ENCODE measurements at regions of chr4 and their contacts with region 1.

Region 1: GRCh38 chr4:112765317-112765975 is 128.5 kb downstream of the LARP7 start:
- DNase-seq: no peak
- H3K4me3 Mint-ChIP-seq: no peak overlapping the region
- H3K27ac Mint-ChIP-seq: no peak overlapping the region
- H3K4me1 Mint-ChIP-seq: no peaks in the 10 kb centered on the region
- H3K27me3 Mint-ChIP-seq: peaks cover 3% of the 10 kb centered on the region

Region 2: DNA sequence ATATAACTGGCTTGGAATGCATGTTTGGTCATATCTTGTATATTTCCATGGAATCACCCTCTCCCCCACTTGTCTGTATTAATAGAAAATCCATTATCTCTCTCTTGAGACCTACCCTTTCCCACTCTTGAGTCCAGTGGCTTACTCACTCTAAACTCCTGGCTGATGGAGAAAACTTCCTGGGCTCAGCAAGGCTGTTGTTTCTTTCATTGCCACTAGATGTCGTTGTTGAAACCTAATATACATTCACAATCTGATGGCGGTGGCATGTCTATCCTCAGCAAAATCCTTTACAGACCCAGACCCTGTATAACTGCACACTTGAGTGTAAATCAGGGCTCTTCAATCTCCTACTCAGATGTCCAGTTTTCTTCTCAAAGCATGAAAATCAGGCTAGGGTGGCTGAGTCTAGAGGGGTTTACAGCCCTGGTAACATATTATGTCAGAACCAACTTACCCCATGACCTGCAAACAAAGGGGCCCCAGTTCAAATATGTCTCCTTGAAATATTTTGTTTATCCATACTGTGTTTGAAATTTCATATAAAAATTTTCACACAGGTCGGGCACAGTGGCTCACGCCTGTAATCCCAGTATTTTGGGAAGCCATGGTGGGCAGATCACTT is 690.2 kb before region 1 on chr4:
- CTCF ChIA-PET with region 1: no interaction called
- intact Hi-C with region 1: loop called (anchors 5 kb)
- DNase-seq: peak; percentile 48
- H3K4me3 Mint-ChIP-seq: no peak overlapping the region
- H3K27ac Mint-ChIP-seq: no peak overlapping the region
- H3K4me1 Mint-ChIP-seq: no peaks in the 10 kb centered on the region
- H3K27me3 Mint-ChIP-seq: peaks cover 3% of the 10 kb centered on the region

Region 3: DNA sequence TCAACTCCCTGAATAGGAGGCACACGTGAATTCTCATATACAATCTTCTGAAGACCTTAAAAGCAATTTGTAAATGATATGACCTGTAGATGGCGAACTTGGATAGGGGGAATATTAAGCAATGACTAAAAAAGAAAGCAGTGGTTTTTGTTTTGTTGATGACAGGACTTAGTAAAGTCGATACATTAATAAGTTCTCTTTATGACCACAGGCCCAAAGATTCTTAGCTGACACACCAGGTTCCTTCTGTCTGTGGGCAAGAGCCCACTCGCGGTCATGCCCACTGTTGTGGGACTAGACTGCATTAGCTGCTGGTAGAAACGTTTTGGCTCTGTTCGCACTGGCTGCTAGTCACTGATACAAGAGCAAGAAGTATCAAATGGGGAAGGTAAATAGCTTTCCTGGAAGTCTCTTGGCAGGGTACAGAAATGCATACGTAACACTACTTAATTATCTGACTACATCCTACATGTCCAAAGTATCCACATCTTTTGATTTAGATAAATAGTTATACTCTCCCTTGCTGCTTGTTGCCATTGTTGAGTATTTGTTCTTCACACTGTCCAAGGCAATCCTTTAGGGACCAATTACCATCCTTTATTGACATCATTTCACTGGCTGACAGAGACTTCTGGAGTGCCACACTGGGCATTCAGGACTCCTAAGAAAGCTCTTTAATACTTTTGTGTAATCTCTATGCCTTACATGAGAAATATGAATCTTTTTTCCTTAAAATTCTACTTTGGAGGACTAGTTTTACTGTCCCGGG is 437.3 kb before region 1 on chr4:
- CTCF ChIA-PET with region 1: interaction called, 5 read pairs
- intact Hi-C with region 1: loop called (anchors 5 kb)
- DNase-seq: no peak
- H3K4me3 Mint-ChIP-seq: no peak overlapping the region
- H3K27ac Mint-ChIP-seq: no peak overlapping the region
- H3K4me1 Mint-ChIP-seq: no peaks in the 10 kb centered on the region
- H3K27me3 Mint-ChIP-seq: no peaks in the 10 kb centered on the region

Region 4: GRCh38 chr4:112636688-112637551 is 128.5 kb before region 1 on chr4 and contains the starts of genes LARP7 and ZGRF1:
- CTCF ChIA-PET with region 1: interaction called, 70 read pairs
- intact Hi-C with region 1: loop called (anchors 1 kb)
- DNase-seq: peak; percentile 99
- H3K4me3 Mint-ChIP-seq: no peak within 1 kb of the TSS
- H3K27ac Mint-ChIP-seq: peak within 1 kb of the TSS; percentile 16
- H3K4me1 Mint-ChIP-seq: peaks cover 27% of the 10 kb centered on the region
- H3K27me3 Mint-ChIP-seq: no peaks in the 10 kb centered on the region
- total RNA-seq, gene LARP7: 41.5 to 41.9 TPM
- total RNA-seq, gene ZGRF1: 40.0 to 43.0 TPM

Region 5: DNA sequence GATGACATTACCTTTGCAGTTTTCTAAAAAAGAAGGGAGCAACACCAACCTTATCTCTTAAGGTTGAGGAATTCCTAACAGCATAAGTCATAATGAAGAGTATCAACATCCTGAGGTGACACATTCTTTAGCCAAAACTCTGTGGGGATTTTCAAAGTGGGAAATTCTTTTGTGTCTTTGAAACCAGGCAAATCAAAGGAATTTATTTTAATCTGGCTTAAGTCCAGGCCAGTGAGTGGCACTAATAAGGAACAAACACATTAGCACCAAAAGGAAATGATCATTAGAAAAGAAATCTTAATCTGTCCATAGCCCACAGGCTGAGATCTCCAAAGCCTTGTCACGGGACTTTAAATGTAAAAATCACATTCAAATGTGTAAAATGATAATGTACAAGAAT is 18.4 kb before region 1 on chr4:
- CTCF ChIA-PET with region 1: interaction called, 18 read pairs
- intact Hi-C with region 1: no loop called
- DNase-seq: no peak
- H3K4me3 Mint-ChIP-seq: no peak overlapping the region
- H3K27ac Mint-ChIP-seq: no peak overlapping the region
- H3K4me1 Mint-ChIP-seq: peaks cover 2% of the 10 kb centered on the region
- H3K27me3 Mint-ChIP-seq: peaks cover 5% of the 10 kb centered on the region

Region 6: DNA sequence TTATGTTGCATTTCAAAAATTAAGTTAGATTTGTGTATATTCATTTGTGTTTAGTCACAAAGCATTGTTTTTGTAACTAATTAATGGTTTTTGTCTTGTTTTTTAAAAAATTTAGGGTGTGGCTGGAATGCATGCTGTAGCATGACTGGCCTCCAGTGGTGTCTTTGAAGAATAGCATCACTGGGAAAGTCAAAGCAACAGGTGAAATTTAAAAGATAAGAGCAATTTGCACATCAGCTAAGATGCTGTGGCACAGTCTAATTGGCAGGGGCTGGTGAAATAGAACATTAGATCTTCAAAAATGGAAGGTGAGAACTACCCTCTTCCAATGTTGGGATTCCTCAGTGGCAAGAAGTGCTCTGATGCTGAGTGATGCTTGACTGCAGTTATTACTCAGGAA is 329.4 kb after region 1 on chr4:
- CTCF ChIA-PET with region 1: no interaction called
- intact Hi-C with region 1: loop called (anchors 2 kb)
- DNase-seq: no peak
- H3K4me3 Mint-ChIP-seq: no peak overlapping the region
- H3K27ac Mint-ChIP-seq: no peak overlapping the region
- H3K4me1 Mint-ChIP-seq: no peaks in the 10 kb centered on the region
- H3K27me3 Mint-ChIP-seq: no peaks in the 10 kb centered on the region

Measured in activated naive CD4-positive, alpha-beta T cell treated with anti-CD3 and anti-CD28 coated beads for 36 hours (primary cell).